ENCODE measurements at regions of chr12 and their contacts with region 1.

Region 1: DNA sequence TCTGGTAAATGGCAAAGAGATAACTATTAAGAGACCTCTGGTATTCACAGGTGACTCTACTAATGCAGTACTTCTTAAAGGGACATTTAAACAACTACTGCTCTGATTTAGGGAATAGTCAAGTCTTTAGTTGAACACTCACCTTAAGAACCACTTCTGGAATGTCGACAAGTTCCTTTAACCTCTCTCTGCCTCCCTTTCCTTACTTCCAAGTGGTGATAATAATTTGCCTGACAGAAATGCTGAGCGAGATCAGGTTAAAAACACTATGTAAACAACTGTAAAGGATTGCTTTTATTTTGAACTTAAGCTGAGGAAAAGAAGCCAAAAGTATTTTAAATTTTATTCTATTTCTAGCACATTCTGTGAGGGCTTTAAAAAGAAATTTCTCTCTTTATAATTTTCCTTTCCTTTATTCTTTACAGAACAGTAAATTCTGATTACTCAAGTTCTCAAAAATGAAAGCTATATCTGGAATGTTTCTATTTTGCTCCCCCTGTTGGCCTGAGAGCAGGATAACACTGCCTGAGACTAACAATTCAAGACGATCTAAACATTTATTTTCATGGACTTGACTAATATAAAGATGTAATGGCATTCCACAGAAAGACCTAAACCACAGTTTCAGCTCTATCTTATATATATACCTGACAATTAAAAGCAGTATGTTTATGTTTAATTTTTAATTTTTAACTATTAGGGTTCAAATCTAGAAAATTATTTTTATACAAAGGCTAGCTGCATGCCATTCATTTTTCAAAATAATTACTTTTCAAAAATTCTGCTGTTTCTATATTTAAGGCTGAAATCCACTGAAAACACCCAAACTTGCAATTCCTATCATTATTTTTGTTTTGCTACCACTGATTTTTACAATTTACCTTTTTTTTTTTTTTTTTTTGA is 29.2 kb downstream of the ZCCHC8 start:
- DNase-seq: no peak
- H3K4me3 ChIP-seq: no peak overlapping the region
- H3K27ac ChIP-seq: peak overlapping the region; percentile 72 to 80 (median 77)
- H3K4me1 ChIP-seq: peaks cover 0 to 10% (median 7%) of the 10 kb centered on the region in 4 donors
- H3K27me3 ChIP-seq: no peaks in the 10 kb centered on the region
- CTCF ChIP-seq: peak; percentile 63 to 81 (median 78)
- EP300 ChIP-seq: no peak
- POLR2A ChIP-seq: no peak

Region 2: GRCh38 chr12:122336015-122336946 is 135.3 kb before region 1 on chr12:
- intact Hi-C with region 1: loop called (anchors 5 kb)
- DNase-seq: no peak
- H3K4me3 ChIP-seq: no peak overlapping the region
- H3K27ac ChIP-seq: no peak overlapping the region
- H3K4me1 ChIP-seq: no peaks in the 10 kb centered on the region
- H3K27me3 ChIP-seq: no peaks in the 10 kb centered on the region
- CTCF ChIP-seq: peak in 3 of 4 experiments; percentile 36 to 63 (median 43)
- EP300 ChIP-seq: no peak
- POLR2A ChIP-seq: no peak

Region 3: DNA sequence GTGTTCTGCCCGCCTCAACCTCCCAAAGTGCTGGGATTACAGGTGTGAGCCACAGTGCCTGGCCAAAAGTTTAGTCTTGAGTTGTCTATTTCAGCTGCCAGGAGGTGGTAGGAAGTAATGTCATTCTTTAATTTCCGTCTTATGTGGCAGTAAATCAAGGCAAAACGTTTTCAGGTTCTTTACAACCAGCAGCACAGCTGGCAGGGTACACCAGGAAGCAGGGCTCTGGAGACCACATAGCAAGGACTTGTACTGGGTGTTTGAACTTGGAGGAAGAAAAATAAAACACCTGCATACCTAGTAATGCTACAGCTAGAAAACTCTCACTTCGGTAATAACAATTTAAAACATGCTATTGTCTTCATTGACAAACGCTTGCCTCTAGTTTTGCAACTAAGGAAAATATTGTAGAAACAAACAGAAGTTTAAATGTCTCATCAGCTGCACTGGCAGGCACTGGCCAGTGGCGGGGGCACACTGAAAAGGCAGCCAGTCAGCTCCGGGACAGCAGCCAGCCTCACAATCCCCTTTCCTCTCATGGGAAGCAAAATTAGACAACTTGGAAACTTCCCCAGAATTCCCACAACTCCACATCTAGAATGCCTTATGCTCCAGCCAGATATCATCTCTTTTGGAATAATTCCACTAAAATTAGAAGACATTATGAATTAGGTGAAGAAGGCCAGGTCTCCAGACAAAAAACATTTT is 121.3 kb before region 1 on chr12:
- intact Hi-C with region 1: loop called (anchors 5 kb)
- DNase-seq: no peak
- H3K4me3 ChIP-seq: no peak overlapping the region
- H3K27ac ChIP-seq: peak overlapping the region; percentile 19 to 69 (median 63)
- H3K4me1 ChIP-seq: peaks cover 0 to 22% (median 17%) of the 10 kb centered on the region in 4 donors
- H3K27me3 ChIP-seq: no peaks in the 10 kb centered on the region
- CTCF ChIP-seq: peak; percentile 11 to 48 (median 27)
- EP300 ChIP-seq: no peak
- POLR2A ChIP-seq: no peak

Region 4: DNA sequence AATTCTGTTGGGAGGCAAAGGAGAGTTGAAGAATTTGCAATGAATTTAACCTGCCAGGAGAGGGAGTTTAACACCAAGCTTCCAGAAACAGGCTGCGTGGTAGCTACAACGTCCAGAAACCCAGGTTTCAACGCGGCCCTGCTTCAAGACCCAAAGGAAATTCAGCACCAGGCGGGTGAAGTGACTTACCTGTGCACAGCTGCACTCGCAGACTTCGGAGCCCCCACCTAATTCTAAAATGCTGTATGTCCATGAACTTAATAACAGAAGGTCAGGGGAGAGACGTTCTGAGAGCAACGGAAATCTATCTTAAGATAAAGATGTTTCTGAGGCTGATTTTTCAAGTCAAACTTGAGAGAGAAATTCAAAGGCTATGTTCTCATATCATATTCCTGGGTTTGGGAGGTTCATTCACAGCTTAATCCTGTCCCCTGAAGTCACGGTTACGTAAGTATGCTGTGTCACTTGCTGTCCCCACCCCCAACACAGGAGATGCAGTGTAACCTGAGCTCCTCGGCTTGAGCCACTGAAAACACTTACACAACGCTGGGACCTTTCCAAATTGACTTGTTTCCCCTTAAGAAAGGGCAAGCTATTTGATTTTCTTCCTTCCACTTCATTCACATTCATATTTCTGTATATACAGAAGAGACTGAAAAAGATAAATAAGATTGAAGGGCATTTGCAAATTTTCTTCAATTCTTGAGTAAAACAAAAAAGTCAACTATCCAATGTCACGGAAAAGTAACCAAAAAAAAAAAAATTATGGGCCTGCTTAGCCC is 71.8 kb before region 1 on chr12:
- intact Hi-C with region 1: loop called (anchors 1 kb)
- DNase-seq: peak; percentile 92
- H3K4me3 ChIP-seq: peak overlapping the region; percentile 3 to 22 (median 12)
- H3K27ac ChIP-seq: peak overlapping the region; percentile 85 to 99 (median 90)
- H3K4me1 ChIP-seq: peaks cover 0 to 88% (median 71%) of the 10 kb centered on the region in 4 donors
- H3K27me3 ChIP-seq: no peaks in the 10 kb centered on the region
- CTCF ChIP-seq: peak in 3 of 4 experiments; percentile 61 to 81 (median 75)
- EP300 ChIP-seq: peak in 1 of 4 donors; percentile 37
- POLR2A ChIP-seq: no peak

Region 5: GRCh38 chr12:122421821-122422729 is 49.5 kb before region 1 on chr12 and contains the start of gene CLIP1:
- intact Hi-C with region 1: loop called (anchors 5 kb)
- DNase-seq: peak; percentile 82
- H3K4me3 ChIP-seq: peak within 1 kb of the TSS; percentile 78 to 99 (median 88)
- H3K27ac ChIP-seq: peak within 1 kb of the TSS; percentile 97 to 100 (median 100)
- H3K4me1 ChIP-seq: peaks cover 0 to 54% (median 47%) of the 10 kb centered on the region in 4 donors
- H3K27me3 ChIP-seq: no peaks in the 10 kb centered on the region
- CTCF ChIP-seq: peak in 3 of 4 experiments; percentile 12 to 55 (median 20)
- EP300 ChIP-seq: no peak
- POLR2A ChIP-seq: no peak
- total RNA-seq, gene CLIP1: 159 to 257 (median 196) TPM